ENCODE measurements at regions of chr2 and their contacts with region 1.

Region 1: GRCh38 chr2:190781604-190782198 is 98.9 kb upstream of the GLS start:
- DNase-seq: no peak
- H3K4me3 ChIP-seq: no peak overlapping the region
- H3K27ac ChIP-seq: no peak overlapping the region
- H3K4me1 ChIP-seq: peaks cover 0 to 4% of the 10 kb centered on the region in 2 donors
- H3K27me3 ChIP-seq: no peaks in the 10 kb centered on the region
- CTCF ChIP-seq: peak; percentile 42 to 69 (median 60)

Region 2: GRCh38 chr2:190802129-190802528 is 20.4 kb after region 1 on chr2:
- intact Hi-C with region 1: loop called (anchors 2 kb)
- DNase-seq: no peak
- H3K4me3 ChIP-seq: no peak overlapping the region
- H3K27ac ChIP-seq: no peak overlapping the region
- H3K4me1 ChIP-seq: no peaks in the 10 kb centered on the region
- H3K27me3 ChIP-seq: no peaks in the 10 kb centered on the region
- CTCF ChIP-seq: no peak

Region 3: GRCh38 chr2:190835303-190835930 is 53.7 kb after region 1 on chr2:
- intact Hi-C with region 1: loop called (anchors 5 kb)
- DNase-seq: peak; percentile 13 to 89
- H3K4me3 ChIP-seq: peak overlapping the region in 1 of 2 donors; percentile 14
- H3K27ac ChIP-seq: peak overlapping the region; percentile 59 to 80
- H3K4me1 ChIP-seq: peaks cover 0 to 29% of the 10 kb centered on the region in 2 donors
- H3K27me3 ChIP-seq: no peaks in the 10 kb centered on the region
- CTCF ChIP-seq: no peak

Region 4: DNA sequence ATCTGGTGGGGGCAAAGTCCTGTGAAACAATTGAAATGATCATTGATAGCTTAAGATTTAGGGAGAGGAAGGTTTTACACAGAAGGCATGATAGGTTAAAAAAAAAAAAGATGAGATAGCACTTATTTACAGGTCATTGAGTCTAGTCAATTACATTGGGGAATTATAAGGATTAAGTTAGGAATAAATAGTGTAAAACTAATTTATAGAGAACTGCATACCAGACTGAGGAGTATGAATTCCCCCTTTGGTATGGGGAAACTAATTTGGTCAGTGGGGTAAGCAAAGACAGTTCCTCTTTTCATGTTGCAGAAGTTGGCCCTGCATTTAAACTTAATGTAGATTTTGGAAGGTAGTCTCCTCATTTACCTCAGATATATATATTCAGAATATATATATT is 109.7 kb after region 1 on chr2:
- intact Hi-C with region 1: loop called (anchors 5 kb)
- DNase-seq: no peak
- H3K4me3 ChIP-seq: no peak overlapping the region
- H3K27ac ChIP-seq: peak overlapping the region; percentile 32 to 43
- H3K4me1 ChIP-seq: peaks cover 0 to 58% of the 10 kb centered on the region in 2 donors
- H3K27me3 ChIP-seq: no peaks in the 10 kb centered on the region
- CTCF ChIP-seq: no peak

Region 5: DNA sequence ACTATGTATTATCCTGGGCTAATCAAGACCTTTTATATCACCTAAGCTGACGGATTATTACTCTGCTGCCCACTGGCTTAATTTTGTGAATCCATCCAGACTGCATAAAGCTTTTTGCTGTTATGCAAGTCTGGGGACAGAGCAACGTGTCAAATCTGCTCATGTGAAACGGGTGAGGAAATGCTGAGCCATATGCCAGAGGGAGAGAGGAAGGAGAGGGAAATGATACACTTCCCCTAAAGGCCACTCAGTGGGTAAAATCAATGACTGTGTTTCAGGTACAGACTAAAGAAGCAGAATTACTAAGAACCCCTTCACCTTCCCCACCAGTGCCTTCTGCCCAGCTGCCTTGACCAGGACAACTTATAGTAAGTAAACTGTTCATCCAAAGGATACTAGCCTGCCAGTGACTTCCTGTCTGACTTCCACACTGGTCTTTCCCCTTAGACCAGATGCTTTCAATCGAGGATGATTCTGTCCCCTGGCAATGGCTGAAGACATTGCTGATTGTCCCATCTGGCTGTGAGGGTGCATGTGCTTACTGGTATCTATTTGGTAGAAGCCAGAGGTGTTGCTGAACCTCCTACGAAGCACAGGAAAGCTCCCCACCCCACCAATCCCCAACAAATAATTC is 189.3 kb after region 1 on chr2:
- intact Hi-C with region 1: loop called (anchors 5 kb)
- DNase-seq: no peak
- H3K4me3 ChIP-seq: no peak overlapping the region
- H3K27ac ChIP-seq: no peak overlapping the region
- H3K4me1 ChIP-seq: peaks cover 0 to 11% of the 10 kb centered on the region in 2 donors
- H3K27me3 ChIP-seq: no peaks in the 10 kb centered on the region
- CTCF ChIP-seq: no peak

Region 6: DNA sequence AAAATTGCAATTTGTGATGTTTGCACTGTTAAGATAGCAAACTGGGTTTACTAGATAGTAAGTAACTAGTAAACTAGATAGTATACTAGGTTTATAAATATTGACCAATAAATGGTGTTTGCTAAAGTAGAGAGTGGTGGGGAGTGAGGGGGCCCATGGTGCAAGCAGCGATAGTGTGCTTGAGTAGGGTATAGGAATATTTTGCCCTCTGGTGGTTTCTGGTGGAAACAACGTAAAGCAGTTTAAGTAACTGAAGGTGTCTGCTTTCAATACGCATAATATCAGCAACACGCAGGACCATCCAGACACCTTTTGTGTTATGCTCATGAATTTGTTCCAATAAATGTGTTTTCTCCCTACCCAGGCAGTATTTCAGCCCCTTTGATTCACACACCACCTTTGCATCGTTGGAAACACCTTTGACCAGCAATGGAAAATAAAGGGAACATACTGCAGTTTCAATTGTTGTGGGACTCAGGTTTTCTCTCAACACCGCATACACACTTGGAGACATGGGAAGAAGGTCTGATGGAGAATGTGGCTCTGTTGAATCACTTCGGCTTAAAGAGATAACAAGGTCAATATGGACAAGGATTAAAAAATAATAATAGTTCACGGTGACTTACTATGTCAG is 248.9 kb after region 1 on chr2:
- intact Hi-C with region 1: loop called (anchors 1 kb)
- DNase-seq: no peak
- H3K4me3 ChIP-seq: no peak overlapping the region
- H3K27ac ChIP-seq: no peak overlapping the region
- H3K4me1 ChIP-seq: no peaks in the 10 kb centered on the region
- H3K27me3 ChIP-seq: no peaks in the 10 kb centered on the region
- CTCF ChIP-seq: peak; percentile 41 to 65 (median 54)

Region 7: DNA sequence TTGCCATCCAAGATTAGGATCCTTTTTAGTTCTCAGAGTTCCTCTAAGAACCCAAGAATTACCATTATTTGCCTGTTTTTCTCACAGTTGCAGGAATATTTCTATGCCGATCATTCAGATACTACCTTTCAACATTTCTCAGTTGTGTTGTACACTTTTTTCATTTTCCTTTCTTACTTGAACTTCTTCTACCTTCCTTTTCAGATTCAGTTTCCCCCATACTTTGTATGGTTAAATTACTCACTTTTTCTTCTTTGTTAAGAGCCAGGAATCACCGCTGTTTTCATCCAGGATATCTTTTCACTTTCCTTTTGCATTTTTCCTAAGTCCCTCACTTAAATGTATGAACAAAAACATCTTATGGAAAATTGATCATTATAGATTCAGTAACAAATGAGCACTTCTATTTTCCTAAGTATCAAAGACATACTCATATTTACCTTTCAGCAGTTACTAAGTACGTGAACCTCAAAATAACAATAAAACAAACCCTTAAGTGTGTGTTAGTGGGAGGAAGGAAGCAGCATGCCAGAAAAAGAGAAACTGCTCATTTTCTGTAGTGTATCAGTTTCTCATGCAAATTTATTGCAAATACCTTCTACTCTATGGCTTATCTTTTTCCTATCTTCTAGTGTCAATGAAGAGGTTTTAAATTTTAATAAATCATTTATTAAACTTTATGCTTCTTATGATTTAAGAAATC is 296.6 kb after region 1 on chr2:
- intact Hi-C with region 1: no loop called
- DNase-seq: no peak
- H3K4me3 ChIP-seq: no peak overlapping the region
- H3K27ac ChIP-seq: no peak overlapping the region
- H3K4me1 ChIP-seq: no peaks in the 10 kb centered on the region
- H3K27me3 ChIP-seq: no peaks in the 10 kb centered on the region
- CTCF ChIP-seq: no peak

Measured in ascending aorta (tissue), 2 donors.